PC-9 (cell line): ENCODE measurements at regions of chr14 and their contacts with region 1.

Region 1: DNA sequence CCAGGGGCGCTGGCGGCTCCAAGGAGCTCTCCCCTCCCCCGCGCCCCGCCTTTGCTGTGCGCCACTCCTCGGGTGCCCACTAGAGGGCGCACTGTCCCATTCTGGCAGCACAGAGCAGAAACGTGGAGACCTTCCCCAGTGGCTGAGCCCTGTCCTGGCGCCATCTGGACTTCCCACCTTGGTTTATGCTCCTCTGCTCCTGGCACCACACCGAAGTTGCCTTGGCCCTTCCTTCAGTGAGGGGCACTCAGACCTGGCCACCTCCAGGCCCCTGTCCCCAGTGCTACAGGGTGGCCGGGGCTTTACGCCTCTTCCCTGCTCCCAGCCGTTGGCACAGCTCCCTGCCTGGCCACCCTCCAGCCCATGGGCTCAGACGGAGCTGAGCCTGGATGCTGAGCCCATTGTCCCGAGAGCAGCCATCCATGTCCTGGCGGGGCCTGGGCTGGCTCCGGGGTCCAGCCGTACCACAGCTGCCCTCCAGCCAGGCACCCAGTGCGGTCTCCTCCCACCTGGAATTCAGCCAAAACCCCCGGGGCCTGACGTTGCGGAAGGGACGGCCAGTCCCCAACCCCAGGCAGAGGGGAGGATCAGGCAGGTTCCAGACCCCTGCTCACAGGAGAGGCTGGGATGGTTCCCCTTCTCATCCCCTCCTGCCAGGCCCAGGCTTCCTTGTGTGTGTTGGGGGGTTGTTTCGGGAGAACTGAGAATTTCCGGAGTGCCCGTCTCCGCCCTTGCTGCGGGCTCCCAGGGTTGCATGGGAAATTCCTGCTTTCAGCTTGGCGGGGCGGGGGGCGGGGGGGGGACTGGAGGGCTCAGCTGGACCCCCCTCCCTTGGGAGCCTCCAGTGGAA is 5.5 kb upstream of the CRIP1 start:
- DNase-seq: peak; percentile 76 to 92
- H3K4me3 ChIP-seq: peak overlapping the region; percentile 67
- H3K27ac ChIP-seq: peak overlapping the region; percentile 90
- H3K4me1 ChIP-seq: peaks cover 32% of the 10 kb centered on the region
- H3K27me3 ChIP-seq: no peaks in the 10 kb centered on the region
- CTCF ChIP-seq: peak; percentile 96

Region 2: DNA sequence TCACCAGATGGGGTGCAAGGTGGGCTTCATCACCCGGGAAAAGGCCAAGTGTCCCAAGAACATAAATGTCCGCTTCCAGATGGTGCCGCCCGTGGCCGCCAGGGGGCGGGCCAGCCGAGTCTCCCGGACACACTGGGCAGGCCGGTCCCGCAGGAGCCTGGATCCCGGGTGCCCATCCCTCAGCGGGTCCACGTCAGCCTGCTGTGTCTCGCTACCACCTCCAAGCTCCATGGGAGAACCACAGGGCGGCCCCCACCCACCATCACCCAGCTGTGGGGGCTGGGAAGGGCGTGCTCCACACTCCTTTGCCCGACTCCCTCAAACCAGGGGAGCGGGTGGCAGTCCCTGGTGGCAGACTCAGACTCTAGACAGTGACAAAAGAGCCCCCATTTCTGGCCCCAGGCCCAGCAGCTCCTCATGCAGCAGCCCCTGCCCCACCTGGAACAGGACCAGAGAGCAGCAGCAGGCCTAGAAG is 278.1 kb before region 1 on chr14:
- CTCF ChIA-PET with region 1: no interaction called
- POLR2A ChIA-PET with region 1: no interaction called
- intact Hi-C with region 1: loop called (anchors 2 kb)
- DNase-seq: peak in 1 of 2 experiments; percentile 67
- H3K4me3 ChIP-seq: no peak overlapping the region
- H3K27ac ChIP-seq: no peak overlapping the region
- H3K4me1 ChIP-seq: peaks cover 23% of the 10 kb centered on the region
- H3K27me3 ChIP-seq: no peaks in the 10 kb centered on the region
- CTCF ChIP-seq: peak; percentile 95

Region 3: DNA sequence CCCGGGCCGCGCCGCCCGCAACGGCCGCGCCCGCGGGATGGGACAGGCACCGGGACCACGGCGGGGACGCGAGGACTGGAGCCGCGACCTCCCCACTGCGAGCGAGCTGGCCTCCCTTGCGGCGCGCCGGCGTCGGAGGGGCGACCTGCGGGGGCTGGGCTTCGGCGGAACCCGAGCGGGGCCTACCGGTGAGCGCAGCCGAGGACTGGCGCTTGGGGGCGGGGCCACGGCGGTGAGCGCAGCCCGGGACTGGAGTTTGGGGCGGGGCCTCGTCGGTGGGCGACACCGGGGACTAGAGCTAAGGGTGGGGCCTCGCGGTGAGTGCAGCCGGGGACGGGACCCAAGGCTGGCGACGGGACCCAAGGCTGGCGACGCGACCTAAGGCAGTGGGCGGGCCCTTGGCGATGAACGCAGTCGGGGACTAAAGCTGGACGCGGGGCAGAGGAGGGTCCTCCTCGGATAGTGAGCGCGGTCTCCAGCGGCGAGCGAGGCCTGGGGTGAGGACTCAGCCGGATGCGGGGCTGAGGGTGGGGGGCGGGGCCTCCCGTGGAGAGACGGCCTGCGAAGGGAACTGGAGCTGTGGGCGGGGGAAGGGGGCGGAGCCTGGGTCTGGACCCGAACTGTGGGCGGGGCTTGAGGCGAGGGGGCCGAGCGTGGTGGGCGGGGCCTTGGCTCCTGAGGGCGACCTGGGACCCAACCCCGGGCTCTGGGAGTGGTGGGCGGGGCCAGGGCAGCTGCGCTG is 180.2 kb before region 1 on chr14 and contains the start of gene BRF1:
- CTCF ChIA-PET with region 1: no interaction called
- POLR2A ChIA-PET with region 1: no interaction called
- intact Hi-C with region 1: loop called (anchors 5 kb)
- DNase-seq: peak; percentile 86 to 97
- H3K4me3 ChIP-seq: peak within 1 kb of the TSS; percentile 82
- H3K27ac ChIP-seq: peak within 1 kb of the TSS; percentile 55
- H3K4me1 ChIP-seq: peaks cover 9% of the 10 kb centered on the region
- H3K27me3 ChIP-seq: no peaks in the 10 kb centered on the region
- CTCF ChIP-seq: no peak
- total RNA-seq, gene BRF1: 24.8 and 31.2 TPM in 2 replicates

Region 4: GRCh38 chr14:105314287-105315200 is 166.6 kb before region 1 on chr14 and contains the start of gene PACS2:
- CTCF ChIA-PET with region 1: no interaction called
- POLR2A ChIA-PET with region 1: no interaction called
- intact Hi-C with region 1: no loop called
- DNase-seq: peak; percentile 45 to 66
- H3K4me3 ChIP-seq: peak within 1 kb of the TSS; percentile 98
- H3K27ac ChIP-seq: no peak within 1 kb of the TSS
- H3K4me1 ChIP-seq: peaks cover 14% of the 10 kb centered on the region
- H3K27me3 ChIP-seq: no peaks in the 10 kb centered on the region
- CTCF ChIP-seq: no peak
- total RNA-seq, gene PACS2: 43.3 and 52.2 TPM in 2 replicates

Region 5: DNA sequence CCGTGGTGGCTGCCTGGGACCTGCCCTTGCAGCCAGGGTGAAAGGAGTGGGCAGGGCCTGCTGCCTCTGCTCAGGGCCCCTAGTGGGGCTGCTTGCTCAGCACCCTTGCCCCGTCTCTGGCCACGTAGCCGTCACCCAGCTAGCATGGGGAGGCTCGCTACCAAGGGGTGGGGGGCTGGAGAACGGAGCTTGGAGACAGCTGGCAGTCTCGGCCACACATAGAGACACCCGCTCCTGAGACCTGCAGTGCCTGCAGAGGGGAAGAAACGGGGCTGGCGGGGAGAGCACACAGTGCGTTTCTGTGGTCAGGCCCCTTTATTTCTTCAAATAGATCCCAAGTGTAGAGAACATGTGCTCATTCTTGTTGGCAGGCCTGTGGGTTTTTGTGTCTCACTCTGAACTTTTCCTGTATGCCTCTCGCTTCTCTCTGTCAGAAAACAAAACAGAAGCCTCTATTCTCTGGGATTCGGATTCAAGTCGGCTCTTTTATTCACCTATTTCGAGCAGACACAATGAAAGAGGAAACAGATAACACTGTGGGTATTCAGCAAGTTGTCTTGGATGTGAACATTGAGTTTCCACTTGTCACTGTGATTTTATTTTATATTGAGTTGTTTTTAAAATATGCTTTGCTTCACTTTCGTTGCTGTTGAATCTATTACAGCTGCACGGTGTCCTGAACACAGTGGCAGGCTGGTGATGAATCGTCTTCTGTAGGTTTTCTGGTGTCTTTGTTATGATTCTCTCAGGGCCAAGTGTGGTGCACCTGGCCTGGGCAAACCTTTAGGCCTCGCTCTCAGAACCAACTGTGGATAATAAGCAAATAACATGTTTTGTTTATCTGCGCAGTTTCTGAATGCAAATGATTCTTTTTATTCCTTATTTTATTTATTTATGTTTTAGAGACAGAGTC is 140.1 kb before region 1 on chr14:
- CTCF ChIA-PET with region 1: no interaction called
- POLR2A ChIA-PET with region 1: no interaction called
- intact Hi-C with region 1: no loop called
- DNase-seq: no peak
- H3K4me3 ChIP-seq: no peak overlapping the region
- H3K27ac ChIP-seq: no peak overlapping the region
- H3K4me1 ChIP-seq: no peaks in the 10 kb centered on the region
- H3K27me3 ChIP-seq: no peaks in the 10 kb centered on the region
- CTCF ChIP-seq: no peak

Region 6: GRCh38 chr14:105465584-105466031 is 15.6 kb before region 1 on chr14:
- CTCF ChIA-PET with region 1: no interaction called
- POLR2A ChIA-PET with region 1: no interaction called
- intact Hi-C with region 1: loop called (anchors 2 kb)
- DNase-seq: peak; percentile 75 to 82
- H3K4me3 ChIP-seq: no peak overlapping the region
- H3K27ac ChIP-seq: no peak overlapping the region
- H3K4me1 ChIP-seq: peaks cover 37% of the 10 kb centered on the region
- H3K27me3 ChIP-seq: no peaks in the 10 kb centered on the region
- CTCF ChIP-seq: no peak